GM23248 (cell line): ENCODE measurements at regions of chr15 and their contacts with region 1.

Region 1: DNA sequence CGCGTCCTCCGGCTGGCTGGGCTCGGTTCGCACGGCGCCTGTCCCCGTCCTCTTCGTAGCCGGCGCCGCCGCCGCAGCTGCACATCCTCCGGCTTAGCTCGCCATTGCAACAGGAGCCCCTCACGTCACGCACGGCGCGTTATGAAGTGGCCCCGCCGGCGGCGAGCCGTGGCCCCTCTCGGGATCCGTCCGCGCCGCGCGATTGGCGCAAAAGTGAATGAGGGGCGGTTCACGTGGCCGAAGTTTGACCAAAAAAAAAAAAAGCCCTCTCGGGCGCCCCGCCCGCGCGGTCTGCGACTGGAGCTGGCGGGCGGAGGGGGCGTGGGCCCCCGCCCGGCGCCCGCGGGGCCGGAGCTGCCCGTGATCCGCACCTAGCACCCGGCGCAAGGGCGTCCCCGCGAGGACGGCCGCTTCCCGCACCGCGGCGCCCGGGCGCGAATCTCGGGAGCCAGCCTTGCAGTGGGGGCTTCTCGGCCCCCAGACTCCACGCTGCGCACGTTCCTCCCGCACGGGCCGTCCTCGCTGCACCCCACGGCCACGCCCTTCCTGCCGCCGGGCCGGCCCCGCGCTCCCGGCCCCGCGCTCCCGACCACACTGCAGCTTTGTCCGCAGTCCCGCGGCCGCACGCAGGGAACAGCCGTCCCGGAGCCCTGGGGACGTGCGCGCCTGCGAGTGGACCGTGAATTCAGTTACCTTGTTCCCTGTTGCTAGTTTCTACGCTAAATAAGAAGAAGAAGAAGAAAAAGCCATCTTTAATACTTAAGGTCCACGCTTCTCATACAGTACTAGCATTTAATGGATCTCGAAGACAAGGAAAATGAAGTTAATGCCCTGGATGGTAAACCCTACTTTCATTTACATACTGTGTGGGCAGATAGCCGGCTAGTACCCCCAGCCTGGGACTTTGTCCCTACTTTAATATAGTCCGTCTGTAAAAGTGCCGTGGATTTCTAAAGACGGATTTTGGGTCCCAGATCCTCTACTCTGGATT is at the start of gene CHSY1:
- DNase-seq: peak; percentile 97
- H3K4me3 ChIP-seq: peak within 1 kb of the TSS; percentile 90
- H3K27ac ChIP-seq: peak within 1 kb of the TSS; percentile 91
- H3K4me1 ChIP-seq: peaks cover 24% of the 10 kb centered on the region
- H3K27me3 ChIP-seq: no peaks in the 10 kb centered on the region
- total RNA-seq, gene CHSY1: 29.8 and 31.3 TPM in 2 replicates

Region 2: GRCh38 chr15:100918034-100918689 is 334.0 kb before region 1 on chr15:
- in situ Hi-C with region 1: loop called (anchors 25 kb)
- DNase-seq: peak; percentile 92
- H3K4me3 ChIP-seq: peak overlapping the region; percentile 99
- H3K27ac ChIP-seq: peak overlapping the region; percentile 36
- H3K4me1 ChIP-seq: no peaks in the 10 kb centered on the region
- H3K27me3 ChIP-seq: no peaks in the 10 kb centered on the region

Region 3: GRCh38 chr15:101088788-101089583 is 163.1 kb before region 1 on chr15:
- in situ Hi-C with region 1: loop called (anchors 10 kb)
- DNase-seq: peak; percentile 79
- H3K4me3 ChIP-seq: peak overlapping the region; percentile 60
- H3K27ac ChIP-seq: no peak overlapping the region
- H3K4me1 ChIP-seq: peaks cover 4% of the 10 kb centered on the region; the same call in 1 of the 2 replicates
- H3K27me3 ChIP-seq: no peaks in the 10 kb centered on the region